ENCODE measurements at regions of chr14 and their contacts with region 1.

Region 1: DNA sequence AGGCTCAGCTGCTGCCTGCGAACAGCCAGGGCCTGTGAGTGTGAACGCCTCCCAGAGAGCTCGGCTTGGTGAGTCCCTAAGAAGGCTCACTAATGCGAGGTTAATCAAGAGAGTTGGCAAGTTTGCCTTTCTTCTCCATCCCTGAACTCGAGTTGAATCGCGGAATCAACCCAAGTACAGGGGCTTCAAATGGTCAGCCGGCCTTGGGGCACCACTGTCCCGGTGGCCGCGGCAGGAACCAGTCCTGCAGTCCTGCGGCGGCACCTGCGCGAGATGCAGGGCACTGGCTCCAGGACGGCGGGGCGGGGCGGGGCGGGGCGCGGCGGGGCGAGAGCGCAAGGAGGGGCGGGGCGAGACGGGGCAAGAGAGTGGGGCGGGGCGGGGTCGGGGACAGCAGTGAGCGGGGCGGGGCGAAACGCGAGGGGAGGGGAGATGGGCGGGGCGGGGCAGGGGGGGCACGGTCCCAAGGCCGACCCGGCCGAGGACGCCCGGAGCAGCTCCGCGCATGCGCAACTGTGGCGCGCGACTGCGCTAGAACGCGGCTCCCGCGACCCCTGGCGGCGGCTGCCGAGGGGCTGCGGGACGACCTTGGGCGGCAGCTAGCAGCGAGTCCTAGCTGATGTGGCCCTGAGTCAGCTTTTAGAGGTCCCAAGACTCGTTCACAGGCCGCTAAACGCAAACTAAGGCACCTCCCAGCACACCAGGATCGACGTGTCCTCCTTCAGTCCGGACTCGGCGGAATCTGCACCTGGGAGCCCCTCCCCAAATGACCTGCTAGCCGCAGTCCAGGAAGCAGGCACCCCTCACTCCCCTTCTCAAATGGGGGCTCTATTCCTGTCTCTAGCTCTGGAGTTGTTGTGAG is 58.0 kb downstream of the TTC7B start:
- H3K4me3 Mint-ChIP-seq: peak overlapping the region; percentile 74
- H3K27ac Mint-ChIP-seq: peak overlapping the region; percentile 84
- H3K4me1 Mint-ChIP-seq: peaks cover 44% of the 10 kb centered on the region
- H3K27me3 Mint-ChIP-seq: no peaks in the 10 kb centered on the region

Region 2: GRCh38 chr14:90301668-90302090 is 456.6 kb before region 1 on chr14:
- intact Hi-C with region 1: loop called (anchors 5 kb)
- H3K4me3 Mint-ChIP-seq: no peak overlapping the region
- H3K27ac Mint-ChIP-seq: peak overlapping the region; percentile 87
- H3K4me1 Mint-ChIP-seq: peaks cover 54% of the 10 kb centered on the region
- H3K27me3 Mint-ChIP-seq: no peaks in the 10 kb centered on the region

Region 3: GRCh38 chr14:90319634-90320541 is 438.4 kb before region 1 on chr14:
- intact Hi-C with region 1: loop called (anchors 10 kb)
- H3K4me3 Mint-ChIP-seq: no peak overlapping the region
- H3K27ac Mint-ChIP-seq: no peak overlapping the region
- H3K4me1 Mint-ChIP-seq: peaks cover 34% of the 10 kb centered on the region
- H3K27me3 Mint-ChIP-seq: no peaks in the 10 kb centered on the region

Region 4: DNA sequence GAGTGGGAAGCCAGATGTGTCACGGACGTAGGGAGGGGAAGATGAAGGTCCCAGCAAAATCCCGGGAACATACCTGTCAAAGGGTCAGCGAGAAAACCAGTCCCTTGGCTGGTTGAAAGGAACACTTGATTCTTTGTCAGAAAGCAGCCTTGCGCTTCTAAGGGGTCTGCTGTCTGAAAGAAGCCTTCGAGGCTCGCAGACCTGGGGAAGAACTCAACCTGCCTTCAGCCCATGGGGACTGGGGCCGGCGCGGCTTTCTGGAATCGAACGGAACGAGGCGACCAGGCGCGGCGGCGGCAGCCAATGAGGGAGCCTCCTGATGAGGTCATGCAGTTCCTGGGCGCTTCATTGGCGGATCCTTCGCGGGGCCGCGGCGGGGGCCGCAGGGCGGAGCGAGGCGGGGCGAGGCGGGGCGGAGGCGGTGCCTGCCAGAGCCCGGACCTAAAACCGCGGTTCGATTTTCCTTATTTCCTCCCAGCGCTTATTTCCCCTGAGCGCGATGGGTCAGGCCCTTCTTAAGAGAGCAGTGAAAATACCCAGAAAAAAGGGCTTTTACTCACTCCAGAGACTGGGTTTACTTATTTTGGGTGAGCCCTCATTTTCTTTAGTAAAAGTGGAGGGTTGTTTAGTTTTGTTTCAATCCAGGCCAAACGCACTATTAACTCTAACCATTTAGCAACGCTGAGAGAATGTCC is 69.8 kb after region 1 on chr14:
- intact Hi-C with region 1: loop called (anchors 5 kb)
- H3K4me3 Mint-ChIP-seq: peak overlapping the region; percentile 63
- H3K27ac Mint-ChIP-seq: peak overlapping the region; percentile 95
- H3K4me1 Mint-ChIP-seq: peaks cover 28% of the 10 kb centered on the region
- H3K27me3 Mint-ChIP-seq: peaks cover 19% of the 10 kb centered on the region

Region 5: DNA sequence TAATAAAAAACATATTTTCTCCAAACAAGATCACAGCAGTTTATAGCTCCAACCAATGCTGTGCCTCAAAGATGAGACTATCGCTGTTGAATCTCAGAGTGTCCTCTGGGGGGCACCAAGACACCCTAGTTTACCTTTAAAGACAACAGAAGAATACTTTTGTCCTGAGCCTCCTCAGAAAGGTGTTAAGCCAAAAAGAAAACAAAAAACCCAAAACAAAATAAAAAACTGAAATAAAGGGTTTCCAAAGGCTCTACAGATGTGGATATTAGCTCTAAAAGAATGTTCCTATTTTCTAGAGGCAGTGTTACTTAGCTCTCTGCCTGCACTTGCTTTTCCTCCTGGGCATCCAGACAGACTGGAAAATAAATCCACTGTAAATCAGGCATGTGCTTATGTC is 144.8 kb after region 1 on chr14:
- intact Hi-C with region 1: no loop called
- H3K4me3 Mint-ChIP-seq: no peak overlapping the region
- H3K27ac Mint-ChIP-seq: no peak overlapping the region
- H3K4me1 Mint-ChIP-seq: no peaks in the 10 kb centered on the region
- H3K27me3 Mint-ChIP-seq: no peaks in the 10 kb centered on the region